ENCODE measurements at regions of chr6 and their contacts with region 1.

Region 1: GRCh38 chr6:160137989-160138835 is 16.6 kb downstream of the SLC22A1 start:
- DNase-seq: peak; percentile 85
- H3K4me3 Mint-ChIP-seq: no peak overlapping the region
- H3K27ac Mint-ChIP-seq: peak overlapping the region; percentile 16
- H3K4me1 Mint-ChIP-seq: peaks cover 17% of the 10 kb centered on the region
- H3K27me3 Mint-ChIP-seq: no peaks in the 10 kb centered on the region

Region 2: DNA sequence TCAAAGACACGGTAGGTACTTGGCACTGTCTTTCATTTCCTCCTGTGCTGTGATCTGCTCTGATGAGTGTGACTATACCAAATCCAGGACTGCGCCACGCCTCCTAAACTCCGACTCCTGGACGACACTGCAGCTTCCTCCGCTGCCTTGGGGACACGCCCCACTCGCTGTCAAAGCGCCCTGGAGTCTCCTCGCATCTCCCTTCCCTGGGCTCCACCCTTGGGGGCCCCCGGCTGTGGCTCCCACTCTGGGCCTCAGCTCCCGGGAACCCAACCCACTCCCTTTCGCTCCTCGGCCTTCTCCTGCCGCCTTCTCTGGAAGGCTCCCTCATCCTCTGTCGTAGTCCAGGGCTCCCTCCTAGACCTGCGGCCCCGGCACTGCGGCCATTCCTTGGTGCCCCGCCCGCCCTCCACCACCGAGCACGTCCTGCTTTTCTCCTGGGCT is 1199.4 kb before region 1 on chr6:
- CTCF ChIA-PET with region 1: no interaction called
- intact Hi-C with region 1: no loop called
- DNase-seq: peak; percentile 55
- H3K4me3 Mint-ChIP-seq: peak overlapping the region; percentile 60
- H3K27ac Mint-ChIP-seq: no peak overlapping the region
- H3K4me1 Mint-ChIP-seq: peaks cover 9% of the 10 kb centered on the region
- H3K27me3 Mint-ChIP-seq: peaks cover 3% of the 10 kb centered on the region

Region 3: DNA sequence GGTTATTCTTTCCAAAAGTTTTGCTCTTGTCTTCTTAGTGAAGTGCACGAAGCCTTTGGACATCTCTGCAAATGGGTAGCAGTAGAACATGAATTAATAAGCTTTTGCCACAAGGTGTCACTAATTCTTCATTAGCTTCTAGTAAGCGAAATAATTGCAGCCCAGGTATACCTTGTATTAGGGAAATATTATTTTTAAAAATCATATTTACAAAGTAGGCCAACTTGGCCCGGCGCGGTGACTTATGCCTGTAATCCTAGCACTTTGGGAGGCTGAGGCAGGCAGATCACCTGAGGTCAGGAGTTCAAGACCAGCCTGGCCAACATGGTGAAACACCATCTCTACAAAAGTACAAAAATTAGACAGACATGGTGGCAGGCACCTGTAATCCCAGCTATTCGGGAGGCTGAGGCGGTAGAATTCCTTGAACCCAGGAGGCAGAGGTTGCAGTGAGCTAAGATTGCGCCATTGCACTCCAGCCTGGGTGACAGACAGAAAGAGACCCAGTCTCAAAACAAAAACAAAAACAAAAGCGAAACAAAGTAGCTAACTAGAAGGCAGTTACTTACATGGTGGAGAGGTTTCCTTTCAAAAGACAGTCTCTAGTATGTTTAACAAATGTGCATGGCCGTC is 1129.4 kb before region 1 on chr6:
- CTCF ChIA-PET with region 1: no interaction called
- intact Hi-C with region 1: no loop called
- DNase-seq: no peak
- H3K4me3 Mint-ChIP-seq: no peak overlapping the region
- H3K27ac Mint-ChIP-seq: no peak overlapping the region
- H3K4me1 Mint-ChIP-seq: peaks cover 29% of the 10 kb centered on the region
- H3K27me3 Mint-ChIP-seq: no peaks in the 10 kb centered on the region

Region 4: GRCh38 chr6:160221423-160221822 is 83.2 kb after region 1 on chr6:
- CTCF ChIA-PET with region 1: no interaction called
- intact Hi-C with region 1: loop called (anchors 1 kb)
- DNase-seq: no peak
- H3K4me3 Mint-ChIP-seq: no peak overlapping the region
- H3K27ac Mint-ChIP-seq: no peak overlapping the region
- H3K4me1 Mint-ChIP-seq: peaks cover 8% of the 10 kb centered on the region
- H3K27me3 Mint-ChIP-seq: peaks cover 19% of the 10 kb centered on the region

Region 5: DNA sequence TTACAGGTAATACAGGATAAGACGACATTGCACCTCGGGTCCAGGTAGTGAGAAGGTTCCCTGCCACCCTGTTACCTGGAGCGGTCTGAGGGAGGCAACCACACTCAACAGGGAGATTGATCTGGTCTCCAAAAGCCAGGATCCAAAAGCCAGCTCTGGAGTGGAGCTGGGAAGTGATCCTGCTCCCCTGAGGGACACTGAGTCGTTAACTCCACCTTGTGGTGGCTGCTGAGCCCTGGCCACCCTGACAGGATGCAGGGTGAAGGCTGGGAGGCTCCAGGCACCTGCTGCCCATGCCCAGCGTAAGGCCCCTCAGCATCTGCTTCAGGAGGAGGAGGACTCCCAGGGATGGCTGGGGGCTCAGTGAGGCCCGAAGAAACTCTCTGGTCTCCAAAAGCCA is 159.1 kb after region 1 on chr6:
- CTCF ChIA-PET with region 1: no interaction called
- intact Hi-C with region 1: loop called (anchors 5 kb)
- DNase-seq: no peak
- H3K4me3 Mint-ChIP-seq: no peak overlapping the region
- H3K27ac Mint-ChIP-seq: no peak overlapping the region
- H3K4me1 Mint-ChIP-seq: no peaks in the 10 kb centered on the region
- H3K27me3 Mint-ChIP-seq: peaks cover 2% of the 10 kb centered on the region

Region 6: DNA sequence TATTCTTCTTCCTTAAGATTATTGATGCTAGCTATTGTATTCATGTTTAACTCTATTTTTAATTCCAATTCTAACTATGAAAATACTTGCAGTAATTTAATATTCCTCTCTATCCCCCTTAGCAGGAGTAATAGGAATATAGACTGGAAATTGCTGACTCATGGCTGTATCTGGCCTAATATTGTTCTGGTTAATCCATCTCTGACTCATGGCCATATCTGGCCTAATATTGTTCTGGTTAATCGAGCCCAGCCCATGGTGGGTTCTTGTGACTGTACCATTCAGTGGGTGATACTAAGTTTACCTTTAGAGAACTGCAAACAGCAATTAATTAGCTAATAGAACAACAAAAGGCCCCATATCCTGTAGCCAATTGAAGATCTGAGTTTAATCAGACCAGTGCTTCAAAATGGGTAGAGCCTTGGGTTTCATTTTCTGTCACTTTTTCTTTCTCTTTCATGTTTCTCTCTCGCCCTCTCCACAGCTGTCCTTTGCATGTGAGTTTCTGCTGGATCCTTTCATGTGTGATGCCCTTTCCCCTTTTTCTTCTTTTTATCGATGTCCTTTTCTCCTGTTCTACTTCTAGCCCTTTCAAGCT is 260.6 kb after region 1 on chr6:
- CTCF ChIA-PET with region 1: no interaction called
- intact Hi-C with region 1: no loop called
- DNase-seq: no peak
- H3K4me3 Mint-ChIP-seq: no peak overlapping the region
- H3K27ac Mint-ChIP-seq: no peak overlapping the region
- H3K4me1 Mint-ChIP-seq: peaks cover 2% of the 10 kb centered on the region
- H3K27me3 Mint-ChIP-seq: peaks cover 2% of the 10 kb centered on the region

Region 7: GRCh38 chr6:160455541-160456213 is 317.5 kb after region 1 on chr6:
- CTCF ChIA-PET with region 1: interaction called, 35 read pairs
- intact Hi-C with region 1: loop called (anchors 1 kb)
- DNase-seq: peak; percentile 74
- H3K4me3 Mint-ChIP-seq: no peak overlapping the region
- H3K27ac Mint-ChIP-seq: no peak overlapping the region
- H3K4me1 Mint-ChIP-seq: peaks cover 23% of the 10 kb centered on the region
- H3K27me3 Mint-ChIP-seq: no peaks in the 10 kb centered on the region

Region 8: GRCh38 chr6:160667639-160668481 is 529.6 kb after region 1 on chr6:
- CTCF ChIA-PET with region 1: no interaction called
- intact Hi-C with region 1: loop called (anchors 1 kb)
- DNase-seq: peak; percentile 70
- H3K4me3 Mint-ChIP-seq: no peak overlapping the region
- H3K27ac Mint-ChIP-seq: no peak overlapping the region
- H3K4me1 Mint-ChIP-seq: no peaks in the 10 kb centered on the region
- H3K27me3 Mint-ChIP-seq: peaks cover 2% of the 10 kb centered on the region

Measured in activated naive CD4-positive, alpha-beta T cell treated with anti-CD3 and anti-CD28 coated beads for 36 hours (primary cell).